Aorta (tissue), 5 donors: ENCODE measurements at regions of chr20 and their contacts with region 1.

Region 1: GRCh38 chr20:62793912-62794724 is 2.2 kb upstream of the MRGBP start:
- DNase-seq: peak; percentile 98 to 99
- ATAC-seq: peak; percentile 94
- H3K4me3 ChIP-seq: peak overlapping the region; percentile 52 to 66
- H3K27ac ChIP-seq: peak overlapping the region in 1 of 2 donors; percentile 72
- H3K4me1 ChIP-seq: no peaks in the 10 kb centered on the region
- H3K27me3 ChIP-seq: no peaks in the 10 kb centered on the region

Region 2: GRCh38 chr20:62302341-62303058 is 491.6 kb before region 1 on chr20 and contains the start of gene ADRM1:
- intact Hi-C with region 1: loop called in 1 of 2 experiments (anchors 10 kb)
- DNase-seq: peak; percentile 97 to 98
- ATAC-seq: peak; percentile 95
- H3K4me3 ChIP-seq: peak within 1 kb of the TSS; percentile 86 to 87
- H3K27ac ChIP-seq: peak within 1 kb of the TSS; percentile 58 to 94
- H3K4me1 ChIP-seq: no peaks in the 10 kb centered on the region
- H3K27me3 ChIP-seq: no peaks in the 10 kb centered on the region
- total RNA-seq, gene ADRM1: 56.1 to 61.8 TPM

Region 3: GRCh38 chr20:62500237-62500864 is 293.8 kb before region 1 on chr20:
- intact Hi-C with region 1: loop called in 1 of 2 experiments (anchors 5 kb)
- DNase-seq: peak; percentile 80 to 95
- ATAC-seq: peak; percentile 85
- H3K4me3 ChIP-seq: no peak overlapping the region
- H3K27ac ChIP-seq: no peak overlapping the region
- H3K4me1 ChIP-seq: no peaks in the 10 kb centered on the region
- H3K27me3 ChIP-seq: no peaks in the 10 kb centered on the region

Region 4: DNA sequence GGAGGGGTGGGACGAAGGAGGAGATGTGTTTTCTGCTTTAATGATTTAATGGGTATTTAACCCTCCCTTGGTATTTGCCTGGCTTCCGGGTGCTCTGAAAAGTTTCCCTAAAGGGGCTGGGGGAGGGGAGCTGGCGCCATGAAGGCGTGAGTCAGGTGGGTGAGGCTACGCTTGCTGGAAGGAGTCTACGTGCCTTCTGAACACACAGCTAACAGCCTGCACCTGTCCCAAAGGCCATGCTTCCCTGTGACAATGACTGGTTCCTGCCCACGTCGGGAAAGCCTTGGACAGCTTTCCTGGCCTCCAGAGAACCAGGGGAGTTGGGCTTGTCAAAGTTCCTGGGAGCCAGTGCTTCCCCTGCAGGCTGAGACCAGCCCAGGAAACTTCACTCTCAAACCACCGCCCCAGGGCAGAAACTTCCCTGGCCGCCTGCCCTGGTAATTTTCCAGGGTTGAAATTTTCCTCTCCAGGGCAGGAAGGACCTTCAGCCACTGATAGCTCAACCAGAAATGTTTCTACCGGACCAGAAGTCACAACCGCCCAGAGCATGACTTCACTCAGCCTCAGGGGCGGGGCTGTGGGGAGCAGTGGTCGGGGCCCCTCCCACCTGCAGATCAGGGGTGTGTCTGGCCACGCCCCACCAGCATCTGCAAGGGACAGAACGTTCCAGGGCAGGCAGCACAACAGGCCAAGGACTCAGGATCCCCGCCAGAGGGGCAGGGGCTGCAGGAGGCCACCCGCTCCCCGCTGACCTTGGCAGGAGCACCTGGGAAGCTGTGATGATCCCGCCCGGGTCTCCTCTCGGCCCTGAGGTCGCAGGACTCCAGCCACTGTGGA is 170.4 kb before region 1 on chr20:
- intact Hi-C with region 1: loop called in 1 of 2 experiments (anchors 5 kb)
- DNase-seq: peak; percentile 94 to 95
- ATAC-seq: peak; percentile 90
- H3K4me3 ChIP-seq: no peak overlapping the region
- H3K27ac ChIP-seq: peak overlapping the region in 1 of 2 donors; percentile 20
- H3K4me1 ChIP-seq: no peaks in the 10 kb centered on the region
- H3K27me3 ChIP-seq: no peaks in the 10 kb centered on the region

Region 5: DNA sequence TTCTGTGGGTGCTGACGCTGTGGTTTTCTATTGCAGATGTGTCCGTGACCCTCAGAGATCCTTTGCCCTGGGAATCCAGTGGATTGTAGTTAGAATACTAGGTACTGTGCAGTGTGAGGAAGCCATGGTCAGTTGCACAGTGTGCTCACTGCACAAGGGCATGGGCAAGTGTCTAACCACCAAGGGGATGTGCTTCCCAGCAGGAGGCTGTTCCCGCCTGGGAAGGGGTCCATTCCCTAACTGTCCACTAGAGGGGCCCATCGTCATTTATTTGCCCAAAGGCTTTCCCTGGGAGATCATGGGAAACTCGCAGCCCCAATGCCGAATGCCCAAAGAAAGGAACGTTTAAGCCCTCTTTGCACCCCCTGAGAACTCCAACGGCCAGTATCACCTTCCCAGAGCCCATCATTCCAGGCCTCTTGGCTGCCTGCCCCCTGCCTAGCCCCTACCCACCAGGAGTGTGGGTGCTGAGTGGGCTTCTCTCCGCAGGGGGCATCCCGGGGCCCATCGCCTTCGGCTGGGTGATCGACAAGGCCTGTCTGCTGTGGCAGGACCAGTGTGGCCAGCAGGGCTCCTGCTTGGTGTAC is 125.6 kb before region 1 on chr20:
- intact Hi-C with region 1: loop called (anchors 2 to 5 kb)
- DNase-seq: peak in 1 of 2 donors; percentile 74
- ATAC-seq: peak; percentile 67
- H3K4me3 ChIP-seq: no peak overlapping the region
- H3K27ac ChIP-seq: no peak overlapping the region
- H3K4me1 ChIP-seq: no peaks in the 10 kb centered on the region
- H3K27me3 ChIP-seq: no peaks in the 10 kb centered on the region